ENCODE measurements at regions of chr20 and their contacts with region 1.

Region 1: DNA sequence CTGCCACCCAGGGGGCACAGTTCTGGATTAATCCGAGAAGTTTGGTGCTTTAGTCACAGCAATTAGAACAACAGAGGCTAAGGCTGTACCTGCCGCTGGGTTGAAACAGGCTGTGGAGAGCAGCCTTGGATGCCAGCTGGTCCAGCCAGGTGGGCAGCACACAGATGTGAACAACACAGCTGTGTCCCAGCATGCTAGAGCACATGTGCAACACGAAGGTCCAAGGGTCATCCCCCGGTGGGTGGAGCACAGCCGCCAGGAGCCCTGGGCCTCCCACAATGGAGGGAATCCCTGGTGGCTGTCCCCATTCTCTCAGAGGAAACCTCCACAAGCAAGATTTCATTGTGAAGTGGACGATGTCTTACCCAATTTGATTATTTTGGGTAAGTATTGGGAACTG is 99.2 kb upstream of the SYNDIG1 start:
- DNase-seq: no peak
- ATAC-seq: no peak

Region 2: DNA sequence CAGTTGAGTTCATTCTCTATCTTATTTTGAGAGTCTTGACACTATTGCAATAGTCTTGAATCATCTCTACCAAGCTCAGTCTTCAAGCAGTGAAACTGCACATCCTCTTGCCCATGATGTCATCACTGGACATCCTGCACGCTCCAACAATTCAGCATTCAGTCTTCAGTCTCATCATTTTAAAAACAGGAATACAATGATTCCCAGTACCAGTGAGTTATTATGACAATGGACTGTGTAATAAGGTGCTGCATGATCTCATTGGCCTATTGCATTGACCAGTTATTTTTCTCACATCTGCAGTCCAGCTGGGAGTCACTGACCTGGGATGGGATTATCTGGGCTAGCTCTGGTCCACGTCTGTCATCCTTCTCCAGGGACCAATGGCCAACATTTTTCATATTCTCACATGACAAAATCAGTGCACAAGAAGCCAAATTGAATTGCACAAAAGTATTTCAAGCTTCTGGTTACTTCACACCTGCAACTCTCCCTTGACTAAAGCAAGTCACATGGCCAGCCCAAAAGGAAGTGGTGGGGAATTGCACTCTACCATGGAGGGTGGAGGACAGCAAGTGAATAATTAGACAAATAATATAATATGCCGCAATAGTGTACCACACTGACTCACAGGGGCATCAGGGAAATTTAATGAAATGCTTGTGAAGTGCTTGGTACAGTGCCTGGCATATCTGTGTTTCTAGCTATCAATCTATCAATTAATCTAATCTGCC is 537.3 kb before region 1 on chr20:
- intact Hi-C with region 1: no loop called
- DNase-seq: no peak
- ATAC-seq: no peak

Region 3: GRCh38 chr20:24425523-24426135 is 55.4 kb after region 1 on chr20:
- intact Hi-C with region 1: loop called in 1 of 2 experiments (anchors 5 kb)
- DNase-seq: no peak
- ATAC-seq: no peak

Measured in left cardiac atrium (tissue), 4 donors.